ENCODE measurements at regions of chr13 and their contacts with region 1.

Region 1: GRCh38 chr13:50284540-50284939 is 269.3 kb downstream of the KCNRG start:
- DNase-seq: peak in 1 of 14 experiments; percentile 16
- ATAC-seq: no peak
- H3K4me3 ChIP-seq: no peak overlapping the region
- H3K4me3 Mint-ChIP-seq: no peak overlapping the region
- H3K27ac ChIP-seq: no peak overlapping the region
- H3K27ac Mint-ChIP-seq: no peak overlapping the region
- H3K4me1 ChIP-seq: no peaks in the 10 kb centered on the region
- H3K4me1 Mint-ChIP-seq: peaks cover 8% of the 10 kb centered on the region
- H3K27me3 ChIP-seq: no peaks in the 10 kb centered on the region
- H3K27me3 Mint-ChIP-seq: no peaks in the 10 kb centered on the region
- CTCF ChIP-seq: no peak

Region 2: GRCh38 chr13:50255639-50256038 is 28.9 kb before region 1 on chr13:
- CTCF ChIA-PET with region 1: no interaction called
- POLR2A ChIA-PET with region 1: no interaction called
- intact Hi-C with region 1: no loop called
- DNase-seq: peak in 3 of 14 experiments; percentile 34 to 81 (median 34)
- ATAC-seq: no peak
- H3K4me3 ChIP-seq: no peak overlapping the region
- H3K4me3 Mint-ChIP-seq: no peak overlapping the region
- H3K27ac ChIP-seq: no peak overlapping the region
- H3K27ac Mint-ChIP-seq: peak overlapping the region; percentile 35
- H3K4me1 ChIP-seq: peaks cover 11% of the 10 kb centered on the region
- H3K4me1 Mint-ChIP-seq: peaks cover 48% of the 10 kb centered on the region
- H3K27me3 ChIP-seq: no peaks in the 10 kb centered on the region
- H3K27me3 Mint-ChIP-seq: no peaks in the 10 kb centered on the region
- CTCF ChIP-seq: no peak

Region 3: DNA sequence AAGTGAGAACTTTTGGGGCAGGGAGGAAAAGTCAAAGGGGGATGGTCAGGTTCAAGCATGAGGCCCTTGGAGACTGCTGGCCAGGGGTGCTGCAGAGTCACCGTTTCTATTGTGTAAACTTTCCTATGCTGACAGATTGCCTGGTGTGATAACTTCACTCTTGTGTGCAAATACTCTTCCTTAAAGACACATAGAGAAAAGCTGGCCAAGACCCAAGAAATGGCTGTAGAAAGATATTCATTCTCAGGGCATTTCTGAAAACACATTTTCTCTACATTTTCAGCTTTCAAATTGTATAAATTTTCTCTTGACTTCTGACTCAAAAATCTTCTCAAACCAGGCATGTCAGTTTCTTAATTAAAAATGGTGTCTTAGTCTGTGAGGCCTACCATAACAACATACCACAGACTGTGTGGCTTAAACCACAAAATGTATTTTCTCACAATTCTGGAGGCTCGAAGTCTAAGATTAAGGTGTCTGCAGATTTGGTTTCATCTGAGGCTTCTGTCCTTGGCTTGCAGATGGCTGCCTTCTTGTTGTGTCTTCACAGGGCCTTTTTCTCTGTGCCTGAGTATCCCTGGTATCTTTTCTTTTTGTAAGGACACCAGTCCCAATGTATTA is 35.2 kb after region 1 on chr13:
- CTCF ChIA-PET with region 1: no interaction called
- POLR2A ChIA-PET with region 1: no interaction called
- intact Hi-C with region 1: no loop called
- DNase-seq: peak in 3 of 14 experiments; percentile 25 to 59 (median 25)
- ATAC-seq: peak; percentile 32
- H3K4me3 ChIP-seq: no peak overlapping the region
- H3K4me3 Mint-ChIP-seq: peak overlapping the region; percentile 26
- H3K27ac ChIP-seq: peak overlapping the region in 1 of 2 donors; percentile 62
- H3K27ac Mint-ChIP-seq: peak overlapping the region; percentile 80
- H3K4me1 ChIP-seq: peaks cover 14% of the 10 kb centered on the region
- H3K4me1 Mint-ChIP-seq: peaks cover 30% of the 10 kb centered on the region
- H3K27me3 ChIP-seq: no peaks in the 10 kb centered on the region
- H3K27me3 Mint-ChIP-seq: no peaks in the 10 kb centered on the region
- CTCF ChIP-seq: no peak

Region 4: GRCh38 chr13:51083706-51084105 is 799.2 kb after region 1 on chr13:
- CTCF ChIA-PET with region 1: no interaction called
- POLR2A ChIA-PET with region 1: no interaction called
- intact Hi-C with region 1: no loop called
- DNase-seq: no peak
- ATAC-seq: no peak
- H3K4me3 ChIP-seq: no peak overlapping the region
- H3K4me3 Mint-ChIP-seq: no peak overlapping the region
- H3K27ac ChIP-seq: no peak overlapping the region
- H3K27ac Mint-ChIP-seq: no peak overlapping the region
- H3K4me1 ChIP-seq: peaks cover 2% of the 10 kb centered on the region
- H3K4me1 Mint-ChIP-seq: no peaks in the 10 kb centered on the region
- H3K27me3 ChIP-seq: no peaks in the 10 kb centered on the region
- H3K27me3 Mint-ChIP-seq: no peaks in the 10 kb centered on the region
- CTCF ChIP-seq: no peak

Region 5: GRCh38 chr13:51397262-51397941 is 1112.9 kb after region 1 on chr13:
- CTCF ChIA-PET with region 1: no interaction called
- POLR2A ChIA-PET with region 1: no interaction called
- intact Hi-C with region 1: loop called in 1 of 2 experiments (anchors 10 kb)
- DNase-seq: no peak
- ATAC-seq: no peak
- H3K4me3 ChIP-seq: no peak overlapping the region
- H3K4me3 Mint-ChIP-seq: no peak overlapping the region
- H3K27ac ChIP-seq: no peak overlapping the region
- H3K27ac Mint-ChIP-seq: peak overlapping the region; percentile 32
- H3K4me1 ChIP-seq: peaks cover 5% of the 10 kb centered on the region
- H3K4me1 Mint-ChIP-seq: peaks cover 69% of the 10 kb centered on the region
- H3K27me3 ChIP-seq: no peaks in the 10 kb centered on the region
- H3K27me3 Mint-ChIP-seq: no peaks in the 10 kb centered on the region
- CTCF ChIP-seq: no peak